Esophagus muscularis mucosa (tissue), 4 donors: ENCODE measurements at regions of chr3 and their contacts with region 1.

Region 1: GRCh38 chr3:141644931-141645330 is 93.2 kb upstream of the RNF7 start:
- DNase-seq: no peak
- H3K4me3 ChIP-seq: no peak overlapping the region
- H3K27ac ChIP-seq: no peak overlapping the region
- H3K4me1 ChIP-seq: no peaks in the 10 kb centered on the region
- H3K27me3 ChIP-seq: no peaks in the 10 kb centered on the region
- CTCF ChIP-seq: peak; percentile 54 to 63 (median 61)
- EP300 ChIP-seq: no peak
- POLR2A ChIP-seq: no peak

Region 2: GRCh38 chr3:141460097-141460704 is 184.7 kb before region 1 on chr3:
- intact Hi-C with region 1: loop called (anchors 10 kb)
- DNase-seq: peak; percentile 95
- H3K4me3 ChIP-seq: no peak overlapping the region
- H3K27ac ChIP-seq: no peak overlapping the region
- H3K4me1 ChIP-seq: peaks cover 0 to 18% (median 7%) of the 10 kb centered on the region in 4 donors
- H3K27me3 ChIP-seq: no peaks in the 10 kb centered on the region
- CTCF ChIP-seq: peak; percentile 80 to 90 (median 89)
- EP300 ChIP-seq: no peak
- POLR2A ChIP-seq: no peak

Region 3: GRCh38 chr3:141553055-141553454 is 91.9 kb before region 1 on chr3:
- intact Hi-C with region 1: no loop called
- DNase-seq: no peak
- H3K4me3 ChIP-seq: no peak overlapping the region
- H3K27ac ChIP-seq: no peak overlapping the region
- H3K4me1 ChIP-seq: peaks cover 0 to 4% (median 0%) of the 10 kb centered on the region in 4 donors
- H3K27me3 ChIP-seq: no peaks in the 10 kb centered on the region
- CTCF ChIP-seq: no peak
- EP300 ChIP-seq: no peak
- POLR2A ChIP-seq: no peak